B cell (primary cell): ENCODE measurements at regions of chr6 and their contacts with region 1.

Region 1: GRCh38 chr6:157314705-157315321 is 8.5 kb downstream of the TMEM242 start:
- DNase-seq: peak; percentile 77
- ATAC-seq: peak; percentile 92
- H3K4me3 ChIP-seq: no peak overlapping the region
- H3K4me3 Mint-ChIP-seq: no peak overlapping the region
- H3K27ac ChIP-seq: no peak overlapping the region
- H3K27ac Mint-ChIP-seq: no peak overlapping the region
- H3K4me1 ChIP-seq: peaks cover 0 to 3% of the 10 kb centered on the region in 2 donors
- H3K4me1 Mint-ChIP-seq: peaks cover 3% of the 10 kb centered on the region
- H3K27me3 ChIP-seq: no peaks in the 10 kb centered on the region
- H3K27me3 Mint-ChIP-seq: no peaks in the 10 kb centered on the region
- CTCF ChIP-seq: peak; percentile 90

Region 2: GRCh38 chr6:157346373-157346772 is 31.6 kb after region 1 on chr6:
- CTCF ChIA-PET with region 1: no interaction called
- POLR2A ChIA-PET with region 1: no interaction called
- intact Hi-C with region 1: no loop called
- DNase-seq: no peak
- ATAC-seq: no peak
- H3K4me3 ChIP-seq: no peak overlapping the region
- H3K4me3 Mint-ChIP-seq: no peak overlapping the region
- H3K27ac ChIP-seq: no peak overlapping the region
- H3K27ac Mint-ChIP-seq: no peak overlapping the region
- H3K4me1 ChIP-seq: no peaks in the 10 kb centered on the region
- H3K4me1 Mint-ChIP-seq: no peaks in the 10 kb centered on the region
- H3K27me3 ChIP-seq: peaks cover 0 to 33% (median 16%) of the 10 kb centered on the region in 4 experiments
- H3K27me3 Mint-ChIP-seq: peaks cover 57% of the 10 kb centered on the region
- CTCF ChIP-seq: no peak

Region 3: DNA sequence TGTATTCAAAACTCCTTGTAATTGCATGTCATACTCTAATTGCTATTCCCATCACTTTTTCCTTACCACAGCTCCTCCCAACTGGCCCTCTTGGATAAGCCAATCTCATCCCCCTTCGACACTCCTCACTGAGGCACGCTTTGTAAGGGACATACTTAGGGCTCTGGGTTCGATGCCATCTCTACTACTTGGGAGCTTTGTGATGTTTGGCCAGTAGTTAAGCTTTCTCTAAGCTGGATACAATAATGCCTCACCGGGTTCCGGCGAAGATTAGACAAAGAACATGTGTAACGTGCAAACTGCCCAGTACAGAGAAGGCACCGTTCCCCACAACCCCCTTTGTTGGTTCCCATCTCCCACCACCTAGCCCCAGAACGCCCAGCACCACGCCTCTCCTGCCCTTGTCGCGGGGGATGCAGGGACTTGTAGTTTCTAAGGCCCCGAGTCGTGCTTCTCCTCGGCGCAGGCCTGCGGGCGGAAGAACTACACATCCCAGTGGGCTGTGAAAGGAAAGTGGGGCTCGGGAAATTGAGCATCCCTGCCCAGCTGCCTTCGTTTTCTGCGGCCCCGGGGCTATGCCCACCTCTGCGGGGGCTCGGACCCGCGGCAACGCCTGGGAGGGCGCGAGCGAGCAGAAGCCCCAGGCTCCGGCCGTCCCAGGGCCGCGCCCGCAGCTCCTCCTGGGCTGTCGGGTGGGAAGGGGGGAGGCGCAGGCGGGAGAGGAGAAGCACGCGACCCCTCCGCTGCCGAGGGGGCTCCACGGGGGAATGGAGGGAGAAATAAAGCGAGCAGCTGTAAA is 65.0 kb after region 1 on chr6:
- CTCF ChIA-PET with region 1: interaction called, 4 read pairs
- POLR2A ChIA-PET with region 1: interaction called, 3 read pairs
- intact Hi-C with region 1: loop called (anchors 2 kb)
- DNase-seq: peak; percentile 90
- ATAC-seq: peak; percentile 74
- H3K4me3 ChIP-seq: peak overlapping the region; percentile 42 to 99 (median 93)
- H3K4me3 Mint-ChIP-seq: peak overlapping the region; percentile 80
- H3K27ac ChIP-seq: peak overlapping the region; percentile 55 to 80
- H3K27ac Mint-ChIP-seq: peak overlapping the region; percentile 69
- H3K4me1 ChIP-seq: peaks cover 24 to 32% of the 10 kb centered on the region in 2 donors
- H3K4me1 Mint-ChIP-seq: peaks cover 26% of the 10 kb centered on the region
- H3K27me3 ChIP-seq: peaks cover 0 to 12% (median 5%) of the 10 kb centered on the region in 4 experiments
- H3K27me3 Mint-ChIP-seq: peaks cover 8% of the 10 kb centered on the region
- CTCF ChIP-seq: no peak

Region 4: DNA sequence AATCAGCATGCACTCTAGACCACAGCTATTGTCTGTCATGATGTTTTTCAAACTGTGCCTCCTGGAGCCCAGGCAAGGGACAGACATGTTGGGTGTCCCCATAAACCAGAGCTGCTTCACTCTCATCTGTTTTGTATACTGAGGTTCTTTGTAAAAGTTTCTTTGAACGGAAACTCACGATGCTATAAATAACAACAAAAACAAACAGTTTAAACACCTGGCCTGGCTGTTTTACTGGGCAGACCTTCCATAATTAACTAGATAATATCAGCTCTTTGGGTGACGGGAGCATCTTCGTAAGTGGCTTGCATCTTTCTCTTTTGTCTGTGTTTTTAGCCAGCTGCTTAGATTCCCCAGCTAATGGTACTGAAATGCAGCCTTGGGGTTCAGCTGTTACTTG is 256.5 kb after region 1 on chr6:
- CTCF ChIA-PET with region 1: interaction called, 12 read pairs
- POLR2A ChIA-PET with region 1: no interaction called
- intact Hi-C with region 1: no loop called
- DNase-seq: peak; percentile 22
- ATAC-seq: peak; percentile 54
- H3K4me3 ChIP-seq: peak overlapping the region in 2 of 5 experiments; percentile 12 to 22
- H3K4me3 Mint-ChIP-seq: peak overlapping the region; percentile 66
- H3K27ac ChIP-seq: peak overlapping the region in 1 of 2 donors; percentile 47
- H3K27ac Mint-ChIP-seq: peak overlapping the region; percentile 71
- H3K4me1 ChIP-seq: peaks cover 38 to 41% of the 10 kb centered on the region in 2 donors
- H3K4me1 Mint-ChIP-seq: peaks cover 46% of the 10 kb centered on the region
- H3K27me3 ChIP-seq: no peaks in the 10 kb centered on the region
- H3K27me3 Mint-ChIP-seq: no peaks in the 10 kb centered on the region
- CTCF ChIP-seq: no peak

Region 5: DNA sequence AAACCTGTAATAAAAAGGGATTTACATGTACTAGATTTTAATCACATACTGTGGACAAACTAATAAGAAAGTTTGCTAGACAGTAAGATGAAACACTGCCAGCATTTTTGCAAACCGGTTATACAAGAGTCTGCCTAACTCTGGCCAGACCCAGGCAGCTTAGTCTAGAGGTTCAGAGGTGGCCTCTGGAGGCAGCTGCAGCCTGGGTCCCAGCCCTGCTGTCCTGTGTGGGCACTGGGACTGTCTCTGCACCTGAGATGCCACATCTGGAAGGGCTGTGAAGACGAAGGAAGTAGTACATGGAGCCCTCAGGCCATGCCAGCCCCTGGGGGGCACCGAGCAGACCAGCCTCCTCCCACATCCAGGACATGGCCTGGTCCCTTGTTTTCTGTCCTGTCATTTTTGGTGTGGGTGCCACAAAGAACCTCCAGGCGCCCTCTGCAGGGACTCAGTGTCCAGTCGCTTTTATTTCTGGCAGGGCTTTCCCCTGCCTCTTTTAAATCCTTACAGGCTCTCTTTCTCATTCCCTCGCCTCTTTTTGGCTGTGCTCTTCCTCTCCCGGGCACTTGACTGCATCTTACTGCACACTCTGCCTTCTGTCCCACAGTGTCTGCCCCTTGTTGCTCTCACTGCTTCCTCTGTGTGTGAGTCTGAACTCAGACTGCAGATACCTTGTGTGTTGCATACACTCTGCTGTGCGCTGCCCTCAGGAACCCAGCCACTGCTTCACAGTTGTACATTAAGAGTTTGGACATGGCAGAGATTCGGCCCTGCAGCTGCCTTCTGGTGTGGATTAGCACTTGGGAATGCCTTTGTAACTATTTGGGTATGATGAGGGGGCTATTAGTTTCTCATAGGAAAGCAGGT is 282.9 kb after region 1 on chr6:
- CTCF ChIA-PET with region 1: interaction called, 27 read pairs
- POLR2A ChIA-PET with region 1: no interaction called
- intact Hi-C with region 1: loop called (anchors 1 kb)
- DNase-seq: peak; percentile 53
- ATAC-seq: peak; percentile 69
- H3K4me3 ChIP-seq: no peak overlapping the region
- H3K4me3 Mint-ChIP-seq: peak overlapping the region; percentile 7
- H3K27ac ChIP-seq: no peak overlapping the region
- H3K27ac Mint-ChIP-seq: peak overlapping the region; percentile 81
- H3K4me1 ChIP-seq: peaks cover 31 to 52% of the 10 kb centered on the region in 2 donors
- H3K4me1 Mint-ChIP-seq: peaks cover 50% of the 10 kb centered on the region
- H3K27me3 ChIP-seq: no peaks in the 10 kb centered on the region
- H3K27me3 Mint-ChIP-seq: no peaks in the 10 kb centered on the region
- CTCF ChIP-seq: peak; percentile 48

Region 6: GRCh38 chr6:157614026-157614568 is 299.3 kb after region 1 on chr6:
- CTCF ChIA-PET with region 1: interaction called, 47 read pairs
- POLR2A ChIA-PET with region 1: interaction called, 4 read pairs
- intact Hi-C with region 1: loop called (anchors 1 kb)
- DNase-seq: peak; percentile 65
- ATAC-seq: peak; percentile 64
- H3K4me3 ChIP-seq: no peak overlapping the region
- H3K4me3 Mint-ChIP-seq: peak overlapping the region; percentile 67
- H3K27ac ChIP-seq: peak overlapping the region; percentile 57 to 68
- H3K27ac Mint-ChIP-seq: peak overlapping the region; percentile 83
- H3K4me1 ChIP-seq: peaks cover 36 to 67% of the 10 kb centered on the region in 2 donors
- H3K4me1 Mint-ChIP-seq: peaks cover 59% of the 10 kb centered on the region
- H3K27me3 ChIP-seq: no peaks in the 10 kb centered on the region
- H3K27me3 Mint-ChIP-seq: no peaks in the 10 kb centered on the region
- CTCF ChIP-seq: no peak

Region 7: GRCh38 chr6:157873735-157874344 is 559.0 kb after region 1 on chr6:
- CTCF ChIA-PET with region 1: interaction called, 23 read pairs
- POLR2A ChIA-PET with region 1: no interaction called
- intact Hi-C with region 1: loop called (anchors 1 kb)
- DNase-seq: peak; percentile 85
- ATAC-seq: peak; percentile 86
- H3K4me3 ChIP-seq: no peak overlapping the region
- H3K4me3 Mint-ChIP-seq: no peak overlapping the region
- H3K27ac ChIP-seq: no peak overlapping the region
- H3K27ac Mint-ChIP-seq: no peak overlapping the region
- H3K4me1 ChIP-seq: peaks cover 12 to 16% of the 10 kb centered on the region in 2 donors
- H3K4me1 Mint-ChIP-seq: peaks cover 26% of the 10 kb centered on the region
- H3K27me3 ChIP-seq: no peaks in the 10 kb centered on the region
- H3K27me3 Mint-ChIP-seq: no peaks in the 10 kb centered on the region
- CTCF ChIP-seq: peak; percentile 96

Region 8: GRCh38 chr6:157946865-157947532 is 632.2 kb after region 1 on chr6:
- CTCF ChIA-PET with region 1: interaction called, 3 read pairs
- POLR2A ChIA-PET with region 1: no interaction called
- intact Hi-C with region 1: loop called (anchors 1 kb)
- DNase-seq: peak; percentile 45
- ATAC-seq: peak; percentile 24
- H3K4me3 ChIP-seq: no peak overlapping the region
- H3K4me3 Mint-ChIP-seq: no peak overlapping the region
- H3K27ac ChIP-seq: no peak overlapping the region
- H3K27ac Mint-ChIP-seq: peak overlapping the region; percentile 61
- H3K4me1 ChIP-seq: no peaks in the 10 kb centered on the region
- H3K4me1 Mint-ChIP-seq: no peaks in the 10 kb centered on the region
- H3K27me3 ChIP-seq: no peaks in the 10 kb centered on the region
- H3K27me3 Mint-ChIP-seq: no peaks in the 10 kb centered on the region
- CTCF ChIP-seq: peak; percentile 56